ENCODE measurements at regions of chr1 and their contacts with region 1.

Region 1: GRCh38 chr1:155001675-155002463 is 733 bp upstream of the ZBTB7B start:
- DNase-seq: peak; percentile 100
- ATAC-seq: peak; percentile 45 to 54
- H3K4me3 ChIP-seq: peak overlapping the region; percentile 83 to 99 (median 94)
- H3K27ac ChIP-seq: peak overlapping the region; percentile 95 to 99 (median 98)
- H3K4me1 ChIP-seq: peaks cover 34 to 52% of the 10 kb centered on the region in 2 donors
- H3K27me3 ChIP-seq: no peaks in the 10 kb centered on the region
- CTCF ChIP-seq: peak in 2 of 5 experiments; percentile 13 to 55
- POLR2A ChIP-seq: peak; percentile 90 to 92

Region 2: DNA sequence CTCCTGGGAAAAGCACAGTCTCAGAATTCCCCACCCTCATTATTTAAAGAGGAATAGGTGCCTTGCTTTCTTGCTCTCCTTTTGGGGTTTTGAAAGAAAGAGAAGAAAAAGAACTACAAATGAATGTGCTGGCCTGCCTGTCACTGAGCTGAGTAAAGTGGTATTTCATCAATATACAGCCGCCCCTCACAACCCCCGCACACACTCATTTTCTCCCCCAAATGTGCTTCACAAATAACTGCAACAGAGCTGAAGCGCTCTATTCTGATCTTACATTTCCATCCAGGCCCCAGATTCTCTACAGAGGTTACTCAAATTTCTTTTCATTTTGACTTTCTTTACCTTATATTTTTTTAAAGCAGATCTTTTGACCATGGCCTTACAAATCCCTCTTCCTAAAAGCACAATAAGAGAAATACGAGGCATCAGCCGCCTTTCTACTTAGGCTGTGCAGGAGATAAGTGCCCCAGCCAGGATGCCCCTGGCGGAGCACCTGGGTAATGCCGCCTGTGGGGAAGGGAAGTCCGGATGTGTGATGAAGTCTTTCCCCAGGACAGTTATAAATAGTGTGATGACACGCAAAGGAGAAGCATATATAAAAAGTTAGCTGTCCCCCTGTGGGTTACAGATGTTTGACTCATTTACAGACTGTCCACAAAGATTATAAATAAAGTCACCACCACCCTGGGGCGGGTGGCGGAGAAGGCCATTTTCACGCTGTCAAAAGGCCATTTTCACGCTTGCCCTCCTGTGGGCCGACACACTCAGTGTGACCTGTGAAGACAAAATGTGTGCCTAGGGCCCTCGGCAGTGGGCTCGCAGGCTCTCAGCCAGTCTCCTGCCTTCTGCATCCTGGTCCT is 138.3 kb before region 1 on chr1:
- in situ Hi-C with region 1: no loop called
- intact Hi-C with region 1: loop called (anchors 5 kb)
- DNase-seq: peak; percentile 68 to 91
- ATAC-seq: peak; percentile 35 to 37
- H3K4me3 ChIP-seq: no peak overlapping the region
- H3K27ac ChIP-seq: peak overlapping the region; percentile 91 to 99 (median 96)
- H3K4me1 ChIP-seq: peaks cover 67 to 81% of the 10 kb centered on the region in 2 donors
- H3K27me3 ChIP-seq: no peaks in the 10 kb centered on the region
- CTCF ChIP-seq: peak; percentile 85 to 94 (median 91)
- POLR2A ChIP-seq: peak; percentile 65 to 72

Region 3: DNA sequence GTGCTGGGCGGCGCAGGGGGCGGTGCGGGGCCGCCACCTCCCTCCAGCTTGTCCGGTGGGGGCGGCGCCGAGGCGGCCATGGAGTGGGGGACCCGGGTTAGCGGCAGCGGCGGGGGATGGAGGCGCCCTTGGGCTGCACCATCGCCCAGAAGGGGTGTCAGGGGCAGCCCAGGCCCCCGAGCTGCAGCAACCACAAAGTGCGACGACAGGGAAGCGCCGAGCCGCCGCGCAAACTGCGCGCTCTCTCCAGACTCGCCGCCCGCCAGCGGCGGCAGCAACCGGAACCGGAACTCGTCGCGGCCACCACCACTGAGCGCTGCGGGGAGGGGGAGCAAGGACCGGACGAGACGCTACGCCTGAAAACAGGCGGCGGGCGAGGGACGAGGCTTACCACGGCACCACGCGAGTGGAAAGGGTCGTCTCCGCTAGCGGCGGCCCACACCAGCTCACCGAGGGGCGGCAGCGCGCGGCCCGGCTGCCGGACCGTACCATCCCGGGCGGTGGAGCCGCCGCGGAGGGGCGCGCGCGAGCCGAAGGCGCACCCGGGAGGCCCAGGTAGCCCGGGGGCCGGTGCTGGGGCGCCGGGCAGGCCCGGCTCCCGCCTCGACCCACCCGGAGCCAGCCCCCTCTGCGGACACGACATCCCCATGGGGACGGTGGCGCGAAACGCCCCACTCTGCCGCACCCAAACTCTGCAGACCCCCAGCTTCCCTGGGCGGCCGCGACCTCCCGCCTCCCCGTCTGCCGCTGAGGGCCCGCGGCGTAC is 40.2 kb before region 1 on chr1 and contains the start of gene PYGO2:
- in situ Hi-C with region 1: loop called in 1 of 4 experiments (anchors 5 kb)
- intact Hi-C with region 1: loop called (anchors 1 kb)
- DNase-seq: peak; percentile 55 to 62
- ATAC-seq: peak; percentile 87 to 90
- H3K4me3 ChIP-seq: peak within 1 kb of the TSS; percentile 78 to 95 (median 80)
- H3K27ac ChIP-seq: peak within 1 kb of the TSS; percentile 94 to 100 (median 98)
- H3K4me1 ChIP-seq: peaks cover 28 to 36% of the 10 kb centered on the region in 2 donors
- H3K27me3 ChIP-seq: no peaks in the 10 kb centered on the region
- CTCF ChIP-seq: peak; percentile 59 to 88 (median 84)
- POLR2A ChIP-seq: peak; percentile 85 to 87
- total RNA-seq, gene PYGO2: 12.6 to 22.7 (median 17.8) TPM

Region 4: DNA sequence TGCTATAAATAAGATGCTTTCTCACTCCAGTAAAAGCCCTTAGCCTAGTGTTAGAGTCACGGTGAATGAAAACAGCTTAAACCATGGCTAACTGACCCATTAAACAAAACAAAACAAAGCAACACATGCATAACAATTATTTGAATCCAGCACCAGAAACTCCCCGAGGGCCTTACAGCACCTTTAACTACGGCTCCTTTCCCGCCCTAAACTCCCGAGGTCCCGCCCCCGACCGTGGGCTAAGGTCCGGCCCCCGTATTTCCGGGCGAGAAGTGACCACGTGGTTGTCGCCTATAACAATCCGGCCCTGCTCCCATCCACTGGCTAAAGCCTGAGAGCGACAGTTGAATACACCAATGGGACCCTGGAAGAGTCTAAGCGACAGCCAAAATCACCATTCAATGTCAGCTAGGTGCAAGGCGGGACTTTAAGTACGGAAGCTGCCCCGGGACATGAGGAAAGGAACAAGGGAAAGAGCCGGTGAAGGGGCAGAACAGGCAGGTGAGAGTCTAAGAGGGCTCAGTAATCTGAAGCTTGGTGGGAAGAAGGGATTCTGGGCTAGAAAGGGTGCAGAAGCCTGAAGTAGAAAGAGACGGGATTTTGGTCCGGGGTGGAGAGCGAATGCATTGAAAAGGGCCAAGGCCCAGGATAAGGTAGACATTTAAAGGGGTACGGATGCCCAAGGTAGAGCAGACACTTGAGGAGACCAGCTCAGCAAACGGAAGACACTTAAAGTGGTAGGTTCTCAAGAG is 18.8 kb before region 1 on chr1 and contains the start of gene FLAD1:
- in situ Hi-C with region 1: no loop called
- intact Hi-C with region 1: loop called (anchors 2 kb)
- DNase-seq: peak; percentile 98 to 99
- ATAC-seq: peak; percentile 100
- H3K4me3 ChIP-seq: peak within 1 kb of the TSS; percentile 83 to 86 (median 84)
- H3K27ac ChIP-seq: peak within 1 kb of the TSS; percentile 78 to 91 (median 89)
- H3K4me1 ChIP-seq: peaks cover 14 to 27% of the 10 kb centered on the region in 2 donors
- H3K27me3 ChIP-seq: no peaks in the 10 kb centered on the region
- CTCF ChIP-seq: peak in 1 of 5 experiments; percentile 27
- POLR2A ChIP-seq: peak; percentile 44 to 56
- total RNA-seq, gene FLAD1: 26.6 to 36.8 (median 31.7) TPM

Region 5: DNA sequence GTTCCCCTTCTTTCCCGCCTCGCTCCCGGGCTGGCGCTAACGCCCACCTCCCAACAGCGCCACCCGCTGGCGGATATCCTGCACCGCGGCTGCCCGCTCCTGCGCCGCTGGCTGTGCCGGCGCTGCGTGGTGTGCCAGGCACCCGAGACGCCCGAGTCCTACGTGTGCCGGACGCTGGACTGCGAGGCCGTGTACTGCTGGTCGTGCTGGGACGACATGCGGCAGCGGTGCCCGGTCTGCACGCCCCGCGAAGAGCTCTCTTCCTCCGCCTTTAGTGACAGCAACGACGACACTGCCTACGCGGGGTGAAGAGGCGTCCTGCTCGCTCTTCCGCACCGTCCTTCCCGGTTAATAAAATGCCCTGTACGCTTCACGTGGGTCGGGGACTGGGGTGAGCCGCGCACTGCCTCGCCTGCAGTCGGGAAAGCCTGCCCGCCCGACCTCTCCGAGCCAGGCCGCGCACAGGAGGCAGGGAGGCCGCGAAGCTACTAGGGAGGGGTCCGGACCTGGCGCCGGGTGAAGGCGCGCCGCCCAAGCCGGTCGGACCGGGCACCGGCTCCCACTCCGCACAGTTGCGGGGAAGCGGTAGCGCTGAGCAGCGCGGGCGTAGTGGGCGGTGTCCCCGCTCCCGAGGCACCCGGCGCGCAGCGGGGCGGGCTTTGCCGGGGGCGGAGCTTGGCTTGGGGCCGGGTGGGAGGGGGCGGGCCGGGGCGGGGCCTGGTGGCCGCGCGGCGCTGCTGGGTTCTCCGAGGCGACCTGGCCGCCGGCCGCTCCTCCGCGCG is 48.9 kb after region 1 on chr1 and contains the start of gene ADAM15:
- in situ Hi-C with region 1: no loop called
- intact Hi-C with region 1: loop called (anchors 2 kb)
- DNase-seq: peak; percentile 64 to 82
- ATAC-seq: peak; percentile 78 to 83
- H3K4me3 ChIP-seq: peak within 1 kb of the TSS; percentile 82 to 96 (median 90)
- H3K27ac ChIP-seq: peak within 1 kb of the TSS; percentile 90 to 99 (median 94)
- H3K4me1 ChIP-seq: peaks cover 25 to 29% of the 10 kb centered on the region in 2 donors
- H3K27me3 ChIP-seq: no peaks in the 10 kb centered on the region
- CTCF ChIP-seq: peak; percentile 91 to 98 (median 95)
- POLR2A ChIP-seq: no peak
- total RNA-seq, gene ADAM15: 30.3 to 42.8 (median 36.9) TPM

Region 6: DNA sequence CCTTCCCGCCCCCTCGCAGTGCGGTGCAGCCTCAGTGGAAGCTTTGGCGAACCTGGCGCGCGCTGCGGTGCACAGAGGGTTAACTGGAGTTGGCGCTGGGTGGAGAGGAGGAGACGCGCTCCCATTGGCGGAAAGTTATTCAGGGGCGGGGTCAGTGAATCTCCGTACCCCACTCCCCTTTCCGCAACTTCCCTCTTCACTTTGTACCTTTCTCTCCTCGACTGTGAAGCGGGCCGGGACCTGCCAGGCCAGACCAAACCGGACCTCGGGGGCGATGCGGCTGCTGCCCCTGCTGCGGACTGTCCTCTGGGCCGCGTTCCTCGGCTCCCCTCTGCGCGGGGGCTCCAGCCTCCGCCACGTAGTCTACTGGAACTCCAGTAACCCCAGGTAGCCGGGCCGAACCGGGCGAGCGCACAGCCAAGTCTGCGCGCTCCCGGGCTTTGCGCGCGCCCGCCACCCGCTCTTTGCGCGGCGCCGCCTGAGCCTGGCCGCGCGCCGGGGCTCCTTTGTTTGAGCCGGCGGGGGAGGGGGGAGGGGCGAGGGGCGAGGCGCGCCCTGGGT is 61.8 kb after region 1 on chr1 and contains the start of gene EFNA4:
- in situ Hi-C with region 1: no loop called
- intact Hi-C with region 1: no loop called
- DNase-seq: peak; percentile 69 to 72
- ATAC-seq: peak; percentile 91 to 93
- H3K4me3 ChIP-seq: peak within 1 kb of the TSS; percentile 60 to 91 (median 78)
- H3K27ac ChIP-seq: peak within 1 kb of the TSS; percentile 69 to 80 (median 75)
- H3K4me1 ChIP-seq: peaks cover 9 to 18% of the 10 kb centered on the region in 2 donors
- H3K27me3 ChIP-seq: no peaks in the 10 kb centered on the region
- CTCF ChIP-seq: no peak
- POLR2A ChIP-seq: peak in 1 of 2 donors; percentile 28
- total RNA-seq, gene EFNA4: 0.41 to 0.87 (median 0.80) TPM

Region 7: DNA sequence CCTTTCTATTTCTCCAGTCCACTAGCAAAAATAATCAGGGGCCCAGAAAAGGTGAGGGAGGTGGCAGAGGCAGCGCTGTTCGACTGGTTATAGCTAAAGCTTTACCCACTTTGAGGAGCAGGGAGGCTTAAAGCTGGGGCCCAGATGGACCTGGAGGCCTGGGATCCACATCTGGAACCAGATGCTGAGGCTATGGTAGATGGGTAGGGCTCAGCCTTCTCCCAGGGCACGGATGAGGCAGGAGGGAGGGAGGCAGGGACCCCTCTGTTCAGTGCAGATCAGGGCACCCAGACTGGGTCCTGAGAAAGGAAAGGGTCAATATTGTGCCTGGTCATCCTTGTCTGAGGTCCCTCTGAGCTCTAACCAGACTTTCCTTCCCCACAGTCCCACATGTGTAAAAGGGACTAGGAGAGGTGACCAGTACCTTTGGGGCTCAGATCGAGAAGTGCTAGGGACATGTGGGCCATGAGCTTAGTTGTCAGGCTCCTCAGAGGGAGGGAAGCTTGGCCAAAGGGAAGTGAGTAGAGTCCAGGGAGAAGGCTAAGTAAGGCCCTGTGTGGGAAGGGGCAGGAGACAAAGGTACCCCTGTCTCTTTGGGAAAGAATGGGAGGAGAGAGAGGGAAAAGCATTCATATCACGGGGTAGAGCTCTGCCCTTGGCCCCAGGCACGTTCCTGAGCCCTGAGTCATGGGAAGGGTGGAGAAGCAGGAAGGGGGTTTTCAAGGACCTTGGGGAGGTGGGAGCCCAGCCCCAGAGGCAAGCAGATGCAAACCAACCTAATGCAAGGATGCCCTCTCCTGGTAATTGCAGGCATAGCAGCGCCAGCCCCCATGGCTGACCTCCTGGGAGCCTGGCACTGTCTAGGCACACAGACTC is 1128.1 kb after region 1 on chr1:
- in situ Hi-C with region 1: no loop called
- intact Hi-C with region 1: loop called (anchors 10 kb)
- DNase-seq: peak; percentile 64 to 88
- ATAC-seq: peak; percentile 59 to 79
- H3K4me3 ChIP-seq: peak overlapping the region in 2 of 4 donors; percentile 8 to 42
- H3K27ac ChIP-seq: peak overlapping the region; percentile 98 to 99 (median 98)
- H3K4me1 ChIP-seq: peaks cover 53 to 59% of the 10 kb centered on the region in 2 donors
- H3K27me3 ChIP-seq: no peaks in the 10 kb centered on the region
- CTCF ChIP-seq: peak; percentile 98 to 99 (median 99)
- POLR2A ChIP-seq: no peak

Region 8: DNA sequence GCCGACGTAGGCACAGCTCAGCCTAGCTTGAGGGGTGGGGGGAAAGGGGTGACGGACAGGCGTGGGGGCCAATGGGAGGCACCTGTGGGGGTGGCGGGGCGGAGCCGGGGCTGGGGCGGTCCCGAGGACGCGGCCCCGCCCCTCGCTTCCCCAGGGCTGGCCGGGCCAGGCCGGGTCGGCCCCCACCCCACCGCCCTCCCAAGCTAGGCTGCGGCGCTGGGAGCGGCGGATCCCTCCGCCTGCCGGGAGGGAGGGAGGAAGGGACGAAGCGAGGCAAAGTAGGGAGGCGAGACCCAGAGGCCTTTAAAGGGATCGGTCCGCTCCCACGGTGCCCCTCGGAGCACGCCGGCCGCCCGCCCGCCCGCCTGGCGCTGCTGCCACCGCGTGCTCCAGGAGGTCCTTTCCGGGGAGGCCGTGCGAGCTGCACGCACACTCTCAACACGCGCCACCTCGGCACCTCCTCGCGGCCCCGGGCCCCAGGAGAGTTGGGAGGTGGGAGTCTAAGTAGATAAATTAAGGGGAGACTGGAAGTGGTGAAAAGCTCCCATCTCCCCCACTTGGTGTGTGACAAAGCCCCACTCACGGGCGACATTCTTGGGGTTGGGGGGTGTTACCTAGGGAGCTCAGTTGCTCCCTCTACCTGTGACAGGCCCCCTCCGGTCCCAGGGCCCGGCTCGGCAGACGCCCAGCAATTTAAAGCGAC is 1499.1 kb after region 1 on chr1:
- in situ Hi-C with region 1: no loop called
- intact Hi-C with region 1: loop called (anchors 10 kb)
- DNase-seq: peak; percentile 94 to 96
- ATAC-seq: peak; percentile 35 to 37
- H3K4me3 ChIP-seq: peak overlapping the region; percentile 89 to 96 (median 93)
- H3K27ac ChIP-seq: peak overlapping the region; percentile 96 to 99 (median 98)
- H3K4me1 ChIP-seq: peaks cover 66 to 67% of the 10 kb centered on the region in 2 donors
- H3K27me3 ChIP-seq: no peaks in the 10 kb centered on the region
- CTCF ChIP-seq: peak in 4 of 5 experiments; percentile 54 to 67 (median 58)
- POLR2A ChIP-seq: no peak

Measured in gastrocnemius medialis (tissue), 4 donors.